HEK293 (cell line): ENCODE measurements at regions of chr17 and their contacts with region 1.

Region 1: GRCh38 chr17:46841561-46842379 is 9.6 kb upstream of the WNT9B start:
- H3K4me3 ChIP-seq: no peak overlapping the region
- H3K27ac ChIP-seq: no peak overlapping the region
- H3K4me1 ChIP-seq: no peaks in the 10 kb centered on the region
- CTCF ChIP-seq: no peak

Region 2: GRCh38 chr17:46764709-46765401 is 76.9 kb before region 1 on chr17:
- CTCF ChIA-PET with region 1: no interaction called
- POLR2A ChIA-PET with region 1: no interaction called
- H3K4me3 ChIP-seq: no peak overlapping the region
- H3K27ac ChIP-seq: no peak overlapping the region
- H3K4me1 ChIP-seq: no peaks in the 10 kb centered on the region
- CTCF ChIP-seq: no peak

Region 3: DNA sequence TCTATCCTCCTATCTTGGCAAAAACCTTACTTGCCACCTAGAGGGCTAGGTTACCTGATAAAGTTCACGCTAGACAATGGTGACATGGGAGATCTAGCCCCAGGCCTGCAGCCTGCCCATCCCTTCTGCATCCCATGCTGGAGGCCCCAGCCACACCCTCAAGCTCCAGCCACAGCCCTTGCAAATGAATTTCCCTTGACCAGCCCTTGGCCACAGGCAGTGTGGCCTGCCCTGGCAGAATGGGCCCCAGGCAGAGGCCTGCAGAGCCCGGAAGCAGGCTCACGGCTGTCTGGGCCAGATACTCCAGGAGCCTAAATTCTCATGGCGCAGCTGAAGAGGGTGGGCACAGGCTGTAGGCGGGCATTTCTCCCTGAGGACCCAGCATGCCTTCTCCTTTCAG is 38.2 kb before region 1 on chr17:
- CTCF ChIA-PET with region 1: no interaction called
- POLR2A ChIA-PET with region 1: no interaction called
- H3K4me3 ChIP-seq: no peak overlapping the region
- H3K27ac ChIP-seq: no peak overlapping the region
- H3K4me1 ChIP-seq: no peaks in the 10 kb centered on the region
- CTCF ChIP-seq: no peak

Region 4: DNA sequence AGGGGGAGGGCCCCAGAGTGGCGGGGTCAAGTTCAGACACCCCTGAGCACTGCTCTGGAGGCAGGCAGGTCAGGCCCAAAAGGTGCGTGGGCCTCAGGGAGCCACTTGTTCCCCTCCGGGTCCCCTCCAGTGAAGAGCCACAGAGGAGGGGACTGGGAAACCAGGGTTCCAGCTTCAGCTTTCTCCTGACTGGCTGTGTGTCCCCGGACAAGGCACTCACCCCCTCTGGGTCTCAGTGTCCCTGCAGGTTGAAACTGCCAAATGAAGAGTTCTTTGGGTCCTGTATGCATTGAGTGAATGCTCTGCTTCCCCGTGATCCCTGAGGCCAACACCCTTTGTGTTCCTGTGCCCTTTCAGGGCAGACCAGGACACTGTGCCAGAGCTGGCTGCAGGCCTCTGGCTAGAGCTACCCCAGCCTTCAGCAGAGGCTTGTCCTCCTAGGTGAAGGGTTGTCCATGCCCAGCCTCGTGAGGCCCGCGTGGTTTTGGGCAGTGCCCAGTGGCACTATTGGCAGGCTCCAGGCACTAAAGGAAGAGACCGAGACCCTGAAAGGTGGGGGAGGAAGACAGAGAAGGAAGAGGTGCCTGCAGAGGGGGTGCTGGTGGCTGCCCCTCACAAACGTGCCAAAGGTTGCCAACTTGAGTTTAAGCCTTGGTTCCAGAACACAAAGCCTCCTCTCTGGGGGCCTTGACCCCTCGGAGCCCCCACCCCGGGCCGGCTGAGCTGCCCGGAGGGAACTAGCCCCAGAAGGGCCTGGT is 10.0 kb before region 1 on chr17:
- CTCF ChIA-PET with region 1: interaction called, 19 read pairs
- POLR2A ChIA-PET with region 1: no interaction called
- H3K4me3 ChIP-seq: no peak overlapping the region
- H3K27ac ChIP-seq: no peak overlapping the region
- H3K4me1 ChIP-seq: no peaks in the 10 kb centered on the region
- CTCF ChIP-seq: no peak

Region 5: GRCh38 chr17:46859996-46860395 is 18.2 kb after region 1 on chr17:
- CTCF ChIA-PET with region 1: interaction called, 24 read pairs
- POLR2A ChIA-PET with region 1: no interaction called
- H3K4me3 ChIP-seq: no peak overlapping the region
- H3K27ac ChIP-seq: no peak overlapping the region
- H3K4me1 ChIP-seq: no peaks in the 10 kb centered on the region
- CTCF ChIP-seq: no peak

Region 6: GRCh38 chr17:46935658-46936266 is 94.0 kb after region 1 on chr17:
- CTCF ChIA-PET with region 1: interaction called, 94 read pairs
- POLR2A ChIA-PET with region 1: no interaction called
- H3K4me3 ChIP-seq: no peak overlapping the region
- H3K27ac ChIP-seq: no peak overlapping the region
- H3K4me1 ChIP-seq: no peaks in the 10 kb centered on the region
- CTCF ChIP-seq: no peak